HEK293T (cell line): ENCODE measurements at regions of chr1 and their contacts with region 1.

Region 1: GRCh38 chr1:23825076-23825761 is at the start of gene HMGCL:
- DNase-seq: peak; percentile 94

Region 2: GRCh38 chr1:23809751-23810171 is 15.5 kb before region 1 on chr1:
- CTCF ChIA-PET with region 1: interaction called, 12 read pairs
- POLR2A ChIA-PET with region 1: interaction called, 14 read pairs
- DNase-seq: peak; percentile 83